Activated CD4-positive, alpha-beta T cell treated with anti-CD3 and anti-CD28 coated beads for 36 hours (primary cell): ENCODE measurements at regions of chr10 and their contacts with region 1.

Region 1: GRCh38 chr10:80662577-80663261 is 125.0 kb downstream of the SH2D4B start:
- DNase-seq: peak; percentile 83
- ATAC-seq: peak; percentile 74
- H3K4me3 Mint-ChIP-seq: peak overlapping the region; percentile 24
- H3K27ac Mint-ChIP-seq: no peak overlapping the region
- H3K4me1 Mint-ChIP-seq: peaks cover 2% of the 10 kb centered on the region
- H3K27me3 Mint-ChIP-seq: peaks cover 17% of the 10 kb centered on the region

Region 2: DNA sequence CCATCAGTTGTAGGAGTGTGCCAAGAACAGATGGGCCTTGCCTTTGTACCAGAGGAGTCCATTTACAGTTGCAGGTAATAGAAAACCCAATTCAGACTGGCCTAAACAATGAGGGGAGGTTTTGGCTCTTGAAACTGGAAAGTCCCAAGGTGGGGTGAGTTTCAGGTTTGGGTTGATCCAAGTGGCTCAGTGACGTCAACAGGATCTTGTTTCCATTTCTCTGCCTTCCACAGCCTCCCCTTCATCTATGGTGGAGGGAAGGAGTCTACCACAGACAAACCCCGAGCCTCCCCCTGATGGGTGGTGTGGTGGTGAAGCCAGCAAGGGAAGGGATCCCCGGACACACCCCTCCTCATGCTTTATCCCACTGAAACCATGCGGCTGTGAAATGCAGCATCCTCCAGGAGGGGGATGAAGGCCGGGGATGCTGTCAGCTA is 139.9 kb before region 1 on chr10:
- CTCF ChIA-PET with region 1: no interaction called
- POLR2A ChIA-PET with region 1: no interaction called
- intact Hi-C with region 1: no loop called
- DNase-seq: no peak
- ATAC-seq: peak; percentile 30
- H3K4me3 Mint-ChIP-seq: no peak overlapping the region
- H3K27ac Mint-ChIP-seq: peak overlapping the region; percentile 38
- H3K4me1 Mint-ChIP-seq: peaks cover 37% of the 10 kb centered on the region
- H3K27me3 Mint-ChIP-seq: no peaks in the 10 kb centered on the region

Region 3: DNA sequence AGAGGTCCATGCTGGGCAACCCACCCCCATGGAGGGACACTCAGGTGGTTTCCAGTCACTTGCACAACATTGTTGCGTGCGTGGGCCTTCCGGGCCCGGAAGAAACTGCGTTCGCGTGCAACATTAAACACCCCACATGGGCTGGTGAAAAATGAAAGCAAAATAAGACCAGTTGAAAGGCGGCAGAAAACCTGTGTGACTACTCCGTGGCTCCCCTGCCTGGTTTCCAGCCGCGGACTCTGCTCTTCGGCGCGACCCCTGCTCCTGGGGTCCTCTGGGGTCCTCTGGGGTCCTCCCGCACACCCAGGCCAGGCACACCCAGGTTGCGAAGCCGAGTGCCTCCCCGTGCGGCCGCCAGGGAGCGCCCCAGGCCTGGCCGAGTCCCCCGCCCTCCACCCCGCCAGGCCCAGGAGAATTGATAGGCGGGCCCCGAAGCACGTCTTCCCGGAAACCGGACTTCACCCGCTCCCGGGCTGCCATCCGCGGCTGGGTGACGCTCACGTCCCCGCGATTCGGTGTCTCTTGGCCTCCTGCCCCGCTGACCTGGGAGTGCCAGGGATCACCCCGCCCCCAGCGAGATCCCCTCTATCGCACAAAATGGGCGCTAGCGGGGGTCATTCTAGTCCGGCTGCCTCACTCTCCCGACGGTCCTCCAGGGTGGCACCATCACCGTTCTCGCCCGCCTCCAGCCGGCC is 126.9 kb before region 1 on chr10:
- CTCF ChIA-PET with region 1: no interaction called
- POLR2A ChIA-PET with region 1: no interaction called
- intact Hi-C with region 1: loop called in 1 of 2 experiments (anchors 5 kb)
- DNase-seq: peak; percentile 85
- ATAC-seq: peak; percentile 89
- H3K4me3 Mint-ChIP-seq: peak overlapping the region; percentile 85
- H3K27ac Mint-ChIP-seq: peak overlapping the region; percentile 98
- H3K4me1 Mint-ChIP-seq: peaks cover 22% of the 10 kb centered on the region
- H3K27me3 Mint-ChIP-seq: no peaks in the 10 kb centered on the region

Region 4: DNA sequence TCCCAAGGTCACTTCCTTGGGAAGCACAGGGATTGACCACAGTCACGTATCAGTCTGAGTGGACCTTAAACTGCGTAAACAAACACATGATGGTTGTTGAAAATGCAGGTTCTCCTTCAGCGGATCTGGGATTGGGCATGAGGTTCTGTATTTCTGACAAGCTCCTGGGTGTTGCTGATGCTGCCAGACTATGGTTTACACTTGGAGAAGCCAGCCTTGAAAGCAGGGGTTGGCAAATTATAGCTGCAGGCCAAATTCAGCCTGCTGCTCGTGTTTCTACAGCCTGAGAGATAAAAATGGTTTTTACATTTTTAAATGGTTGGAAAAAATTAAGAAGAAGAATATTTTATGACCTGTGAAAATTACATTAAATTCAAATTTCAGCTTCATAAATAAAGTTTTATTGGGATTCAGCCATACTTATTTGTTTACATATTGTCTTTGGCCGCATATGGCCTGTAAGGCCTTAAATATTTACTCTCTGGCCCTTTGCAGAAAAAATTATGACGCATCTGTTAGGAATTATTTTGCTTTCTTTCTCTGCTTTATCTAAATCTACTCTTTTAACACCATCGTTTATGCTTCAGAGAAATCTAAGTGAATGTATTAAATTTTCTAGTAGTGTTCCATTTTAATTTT is 15.4 kb before region 1 on chr10:
- CTCF ChIA-PET with region 1: interaction called, 39 read pairs
- POLR2A ChIA-PET with region 1: no interaction called
- intact Hi-C with region 1: no loop called
- DNase-seq: no peak
- ATAC-seq: no peak
- H3K4me3 Mint-ChIP-seq: no peak overlapping the region
- H3K27ac Mint-ChIP-seq: no peak overlapping the region
- H3K4me1 Mint-ChIP-seq: no peaks in the 10 kb centered on the region
- H3K27me3 Mint-ChIP-seq: peaks cover 5% of the 10 kb centered on the region

Region 5: DNA sequence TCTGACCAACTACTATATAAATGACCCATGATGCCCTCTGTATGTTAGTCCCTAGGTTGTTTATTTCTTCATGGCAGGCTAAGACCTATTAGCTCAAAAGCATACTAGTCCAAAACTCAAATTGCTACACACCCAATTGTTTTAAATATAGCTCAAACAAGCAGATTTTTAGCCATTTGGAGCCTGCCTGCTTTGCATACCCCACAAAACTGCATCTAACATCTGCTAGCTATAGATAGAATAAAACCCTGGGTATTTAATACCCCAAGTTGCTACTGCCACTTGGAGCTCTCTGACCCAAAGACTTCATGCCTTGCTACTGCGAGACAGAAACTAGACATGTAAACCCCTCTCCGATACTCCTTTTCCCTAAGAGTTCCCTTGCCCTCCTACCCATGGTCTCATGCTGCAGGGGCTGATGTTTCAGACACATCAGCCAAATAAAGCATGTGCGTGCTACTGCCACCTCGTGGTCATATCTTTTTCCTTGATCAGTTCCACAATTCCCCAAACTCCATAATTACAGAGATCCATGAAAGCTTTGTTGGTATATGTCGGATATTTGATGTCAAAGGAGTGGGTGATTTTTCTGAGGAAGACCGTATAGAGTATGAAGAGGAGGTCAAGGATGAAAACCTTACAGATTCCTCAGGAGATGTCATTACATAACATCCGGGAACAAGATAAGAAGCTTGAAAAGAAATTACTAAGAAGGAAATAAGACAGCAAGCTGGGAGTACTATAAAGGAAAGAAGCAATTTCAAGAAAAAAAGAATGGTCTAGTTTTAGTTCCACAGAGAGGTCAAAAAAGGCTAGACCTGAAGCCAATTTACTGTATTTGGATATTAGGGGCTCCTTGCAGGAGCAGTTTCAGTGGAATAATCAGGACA is 261.6 kb after region 1 on chr10:
- CTCF ChIA-PET with region 1: interaction called, 14 read pairs
- POLR2A ChIA-PET with region 1: no interaction called
- intact Hi-C with region 1: loop called (anchors 10 kb)
- DNase-seq: peak; percentile 44
- ATAC-seq: no peak
- H3K4me3 Mint-ChIP-seq: no peak overlapping the region
- H3K27ac Mint-ChIP-seq: no peak overlapping the region
- H3K4me1 Mint-ChIP-seq: no peaks in the 10 kb centered on the region
- H3K27me3 Mint-ChIP-seq: peaks cover 7% of the 10 kb centered on the region

Region 6: GRCh38 chr10:81179805-81180452 is 517.2 kb after region 1 on chr10:
- CTCF ChIA-PET with region 1: interaction called, 4 read pairs
- POLR2A ChIA-PET with region 1: no interaction called
- intact Hi-C with region 1: loop called in 1 of 2 experiments (anchors 5 kb)
- DNase-seq: peak; percentile 5
- ATAC-seq: no peak
- H3K4me3 Mint-ChIP-seq: no peak overlapping the region
- H3K27ac Mint-ChIP-seq: no peak overlapping the region
- H3K4me1 Mint-ChIP-seq: no peaks in the 10 kb centered on the region
- H3K27me3 Mint-ChIP-seq: no peaks in the 10 kb centered on the region